Psoas muscle (tissue), 8 donors: ENCODE measurements at regions of chr1 and their contacts with region 1.

Region 1: DNA sequence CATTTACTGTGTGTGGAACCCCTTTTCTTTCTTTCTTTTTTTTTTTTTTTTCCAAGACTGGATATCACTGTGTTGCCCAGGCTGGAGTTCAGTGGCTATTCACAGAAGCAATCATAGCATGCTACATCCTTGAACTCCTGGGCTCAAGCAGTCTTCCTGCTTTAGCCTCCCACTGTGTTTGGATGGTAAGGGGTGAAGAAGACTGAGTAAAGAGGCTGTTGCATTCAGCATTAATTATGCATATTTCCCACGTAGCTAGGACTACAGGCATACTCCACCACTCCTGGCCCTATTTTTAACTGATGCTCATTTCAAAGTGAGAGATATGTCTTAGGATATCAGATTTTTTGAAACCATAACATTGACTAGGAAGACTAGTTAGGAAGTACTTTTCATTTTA is 39.5 kb downstream of the PHACTR4 start:
- DNase-seq: no peak
- ATAC-seq: no peak
- H3K4me3 ChIP-seq: no peak overlapping the region
- H3K27ac ChIP-seq: no peak overlapping the region
- H3K4me1 ChIP-seq: peaks cover 3% of the 10 kb centered on the region
- H3K27me3 ChIP-seq: no peaks in the 10 kb centered on the region
- CTCF ChIP-seq: no peak

Region 2: DNA sequence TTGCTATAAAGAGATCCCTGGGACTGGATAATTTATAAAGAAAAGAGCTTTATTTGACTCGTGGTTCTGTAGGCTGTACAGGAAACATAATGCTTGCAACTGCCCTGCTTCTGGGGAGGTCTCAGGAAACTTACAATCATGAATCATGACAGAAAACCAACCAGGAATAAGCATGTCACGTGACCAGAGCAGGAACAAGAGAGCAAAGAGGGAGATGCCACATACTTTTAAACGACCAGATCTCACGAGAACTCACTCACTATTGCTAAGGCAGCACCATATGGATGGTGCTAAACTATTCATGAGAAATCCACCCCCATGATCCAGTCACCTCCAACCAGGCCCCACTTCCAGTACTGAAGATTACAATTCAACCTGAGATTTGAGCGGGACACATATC is 47.0 kb after region 1 on chr1:
- intact Hi-C with region 1: loop called in 1 of 2 experiments (anchors 10 kb)
- DNase-seq: no peak
- ATAC-seq: no peak
- H3K4me3 ChIP-seq: no peak overlapping the region
- H3K27ac ChIP-seq: peak overlapping the region; percentile 38
- H3K4me1 ChIP-seq: peaks cover 34% of the 10 kb centered on the region
- H3K27me3 ChIP-seq: no peaks in the 10 kb centered on the region
- CTCF ChIP-seq: no peak

Region 3: GRCh38 chr1:28470146-28470545 is 61.1 kb after region 1 on chr1:
- intact Hi-C with region 1: loop called in 1 of 2 experiments (anchors 5 kb)
- DNase-seq: no peak
- ATAC-seq: no peak
- H3K4me3 ChIP-seq: no peak overlapping the region
- H3K27ac ChIP-seq: no peak overlapping the region
- H3K4me1 ChIP-seq: peaks cover 6% of the 10 kb centered on the region
- H3K27me3 ChIP-seq: no peaks in the 10 kb centered on the region
- CTCF ChIP-seq: no peak

Region 4: DNA sequence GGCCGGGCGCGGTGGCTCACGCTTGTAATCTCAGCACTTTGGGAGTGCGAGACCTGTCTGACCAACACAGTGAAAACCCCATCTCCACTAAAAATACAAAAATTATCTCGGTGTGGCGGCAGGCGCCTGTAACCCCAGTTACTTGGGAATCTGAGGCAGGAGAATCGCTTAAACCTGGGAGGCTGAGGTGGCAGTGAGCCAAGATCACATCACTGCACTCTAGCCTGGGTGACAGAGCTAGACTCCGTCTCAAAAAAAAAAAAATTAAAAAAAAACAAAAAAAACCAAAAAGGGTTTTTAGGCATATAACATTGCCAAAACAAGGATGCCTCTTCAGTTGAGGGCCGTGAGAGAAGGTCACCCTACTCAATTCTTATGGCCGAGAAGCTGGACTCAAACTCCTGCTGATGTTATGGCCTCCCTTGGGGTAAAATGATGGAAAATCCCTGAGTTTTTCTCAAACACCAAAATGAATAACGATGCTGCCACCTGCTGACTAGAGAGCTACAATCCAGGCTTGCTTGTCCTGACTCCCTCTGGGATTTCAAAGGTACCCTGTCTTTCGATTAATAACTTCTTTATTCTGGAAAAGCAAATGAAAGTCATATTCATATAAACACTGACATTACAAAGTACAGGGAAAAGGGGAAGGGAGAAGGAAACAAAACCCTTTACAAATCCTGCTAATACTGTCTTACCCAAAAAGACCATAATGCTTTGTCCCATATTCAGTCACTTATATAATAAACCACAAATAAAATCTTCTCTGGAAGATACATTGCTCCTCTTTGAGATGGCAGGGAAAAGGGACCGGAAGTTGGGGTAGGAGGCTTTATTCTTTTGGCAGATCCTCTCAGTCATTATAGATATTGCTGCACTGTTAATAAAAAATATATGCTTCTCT is 193.7 kb after region 1 on chr1:
- intact Hi-C with region 1: loop called in 1 of 2 experiments (anchors 5 kb)
- DNase-seq: no peak
- ATAC-seq: peak in 1 of 4 donors; percentile 75
- H3K4me3 ChIP-seq: no peak overlapping the region
- H3K27ac ChIP-seq: no peak overlapping the region
- H3K4me1 ChIP-seq: peaks cover 13% of the 10 kb centered on the region
- H3K27me3 ChIP-seq: no peaks in the 10 kb centered on the region
- CTCF ChIP-seq: peak; percentile 57